ENCODE measurements at regions of chr7 and their contacts with region 1.

Region 1: GRCh38 chr7:112481833-112482670 is 1.3 kb downstream of the LSMEM1 start:
- DNase-seq: peak in 1 of 6 donors; percentile 28
- ATAC-seq: peak; percentile 54 to 76 (median 64)
- H3K4me3 ChIP-seq: no peak overlapping the region
- H3K27ac ChIP-seq: peak overlapping the region in 2 of 4 donors; percentile 2 to 25
- H3K4me1 ChIP-seq: peaks cover 0 to 21% (median 0%) of the 10 kb centered on the region in 3 donors
- H3K27me3 ChIP-seq: no peaks in the 10 kb centered on the region
- CTCF ChIP-seq: no peak

Region 2: GRCh38 chr7:111741811-111742240 is 740.2 kb before region 1 on chr7:
- intact Hi-C with region 1: loop called in 1 of 3 experiments (anchors 10 kb)
- DNase-seq: peak; percentile 29 to 80 (median 54)
- ATAC-seq: peak; percentile 87 to 98 (median 94)
- H3K4me3 ChIP-seq: no peak overlapping the region
- H3K27ac ChIP-seq: no peak overlapping the region
- H3K4me1 ChIP-seq: no peaks in the 10 kb centered on the region
- H3K27me3 ChIP-seq: no peaks in the 10 kb centered on the region
- CTCF ChIP-seq: peak; percentile 21 to 59 (median 40)

Measured in pancreas (tissue), 10 donors.